ENCODE measurements at regions of chr12 and their contacts with region 1.

Region 1: GRCh38 chr12:6470375-6471163 is at the start of gene VAMP1:
- DNase-seq: peak; percentile 90
- H3K4me3 ChIP-seq: peak within 1 kb of the TSS; percentile 84
- H3K27ac ChIP-seq: peak within 1 kb of the TSS; percentile 87
- H3K27me3 ChIP-seq: no peaks in the 10 kb centered on the region
- CTCF ChIP-seq: no peak
- polyA plus RNA-seq, gene VAMP1: 15.1 and 18.3 TPM in 2 replicates

Region 2: DNA sequence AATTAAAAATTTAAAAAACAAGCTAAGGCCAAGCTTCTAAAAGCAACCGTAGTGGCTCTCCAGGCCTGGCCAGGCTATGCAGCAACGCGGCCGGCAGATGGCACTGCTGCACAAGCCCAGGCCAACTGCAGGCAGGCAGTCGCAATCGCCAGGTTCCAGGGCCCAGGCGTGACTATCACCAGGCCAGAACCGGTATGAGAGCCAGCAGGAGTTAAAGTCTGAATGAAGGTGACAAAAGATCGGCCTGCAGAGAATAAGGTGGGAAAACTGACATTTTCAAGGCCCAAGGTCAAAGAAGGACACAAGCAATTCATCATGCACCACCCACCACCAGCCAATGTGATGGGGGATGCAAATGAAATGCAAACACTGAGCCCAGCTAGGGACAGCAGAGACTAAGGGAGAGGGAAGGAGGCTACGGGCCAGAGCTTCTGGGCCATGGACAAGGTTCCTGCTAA is 481.9 kb before region 1 on chr12:
- CTCF ChIA-PET with region 1: interaction called, 24 read pairs
- POLR2A ChIA-PET with region 1: no interaction called
- DNase-seq: peak; percentile 43
- H3K4me3 ChIP-seq: no peak overlapping the region
- H3K27ac ChIP-seq: no peak overlapping the region
- H3K27me3 ChIP-seq: peaks cover 17% of the 10 kb centered on the region
- CTCF ChIP-seq: peak; percentile 99

Region 3: DNA sequence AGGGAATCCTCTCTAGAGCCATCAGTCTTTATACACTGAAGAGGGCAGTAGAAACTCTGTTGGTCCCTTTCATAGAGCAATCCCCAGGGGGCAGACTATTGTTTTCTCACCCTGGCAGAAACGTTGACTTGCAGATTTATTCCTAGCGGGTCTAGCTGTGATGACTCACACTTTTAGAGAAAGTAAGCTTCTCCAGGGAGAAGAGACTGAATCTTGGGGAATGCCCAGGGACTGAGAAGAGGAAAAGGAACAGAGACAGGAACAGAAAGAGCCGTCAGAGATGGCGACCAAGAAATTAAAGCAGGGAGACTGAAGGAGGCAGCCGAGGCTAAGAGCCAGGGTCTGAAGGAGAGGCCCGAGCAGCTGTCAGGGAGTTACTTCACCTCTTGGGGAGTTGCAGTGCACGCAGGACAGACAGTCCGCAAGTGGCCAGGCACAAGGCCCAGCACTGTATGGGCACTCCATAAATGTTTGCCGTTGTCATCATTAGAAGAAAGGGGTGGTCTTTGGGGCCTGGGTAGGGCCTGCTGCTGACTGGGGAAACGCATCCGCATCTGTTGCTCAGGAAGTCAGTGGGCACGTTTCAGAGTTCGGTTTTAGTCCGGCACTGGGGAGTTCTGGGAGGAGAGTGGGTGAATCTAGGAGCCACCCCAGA is 147.1 kb before region 1 on chr12:
- CTCF ChIA-PET with region 1: interaction called, 30 read pairs
- POLR2A ChIA-PET with region 1: interaction called, 7 read pairs
- DNase-seq: peak; percentile 79
- H3K4me3 ChIP-seq: no peak overlapping the region
- H3K27ac ChIP-seq: peak overlapping the region; percentile 90
- H3K27me3 ChIP-seq: no peaks in the 10 kb centered on the region
- CTCF ChIP-seq: peak; percentile 77

Region 4: DNA sequence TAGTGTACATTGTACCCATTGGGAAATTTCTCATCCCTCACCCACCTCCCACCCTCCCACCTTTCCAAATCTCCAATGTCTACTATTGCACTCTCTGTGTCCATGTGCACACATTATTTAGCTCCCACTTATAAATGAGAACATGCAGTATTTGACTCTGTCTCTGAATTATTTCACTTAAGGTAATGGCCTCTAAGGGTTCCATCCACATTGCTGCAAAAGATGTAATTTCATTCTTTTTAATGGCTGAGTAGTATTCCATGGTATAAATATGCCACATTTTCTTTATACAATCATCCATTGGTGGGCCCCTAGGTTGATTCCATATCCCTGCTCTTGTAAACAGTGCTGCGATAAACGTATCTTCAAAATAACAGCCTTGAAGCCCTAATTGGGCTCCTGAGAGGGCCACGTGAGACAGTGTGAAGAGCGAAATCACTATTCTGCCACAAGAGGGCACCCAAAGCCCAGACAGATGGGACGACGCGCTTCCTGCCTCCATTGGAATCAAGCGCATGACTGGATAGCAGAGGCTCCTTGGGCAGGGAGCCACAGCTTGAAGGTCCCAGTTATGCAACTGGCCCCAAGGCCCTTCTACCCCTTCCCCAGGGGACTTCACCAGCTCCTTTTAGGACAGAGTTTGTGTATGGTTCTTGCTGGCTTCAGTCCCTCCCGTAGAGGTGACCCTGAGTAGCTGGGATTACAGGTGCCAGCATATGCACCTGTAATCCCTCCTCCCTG is 47.1 kb before region 1 on chr12:
- CTCF ChIA-PET with region 1: interaction called, 87 read pairs
- POLR2A ChIA-PET with region 1: interaction called, 5 read pairs
- DNase-seq: peak; percentile 83
- H3K4me3 ChIP-seq: no peak overlapping the region
- H3K27ac ChIP-seq: no peak overlapping the region
- H3K27me3 ChIP-seq: no peaks in the 10 kb centered on the region
- CTCF ChIP-seq: peak; percentile 87

Region 5: GRCh38 chr12:6443361-6443983 is 27.1 kb before region 1 on chr12:
- CTCF ChIA-PET with region 1: interaction called, 41 read pairs
- POLR2A ChIA-PET with region 1: interaction called, 7 read pairs
- DNase-seq: no peak
- H3K4me3 ChIP-seq: no peak overlapping the region
- H3K27ac ChIP-seq: no peak overlapping the region
- H3K27me3 ChIP-seq: no peaks in the 10 kb centered on the region
- CTCF ChIP-seq: no peak

Region 6: GRCh38 chr12:6493497-6494257 is 23.1 kb after region 1 on chr12 and contains the start of gene NCAPD2:
- CTCF ChIA-PET with region 1: interaction called, 5 read pairs
- POLR2A ChIA-PET with region 1: interaction called, 34 read pairs
- DNase-seq: peak; percentile 88
- H3K4me3 ChIP-seq: peak within 1 kb of the TSS; percentile 97
- H3K27ac ChIP-seq: peak within 1 kb of the TSS; percentile 97
- H3K27me3 ChIP-seq: no peaks in the 10 kb centered on the region
- CTCF ChIP-seq: peak; percentile 35; the same call in 1 of the 2 replicates
- polyA plus RNA-seq, gene NCAPD2: 36.1 and 38.4 TPM in 2 replicates

Region 7: DNA sequence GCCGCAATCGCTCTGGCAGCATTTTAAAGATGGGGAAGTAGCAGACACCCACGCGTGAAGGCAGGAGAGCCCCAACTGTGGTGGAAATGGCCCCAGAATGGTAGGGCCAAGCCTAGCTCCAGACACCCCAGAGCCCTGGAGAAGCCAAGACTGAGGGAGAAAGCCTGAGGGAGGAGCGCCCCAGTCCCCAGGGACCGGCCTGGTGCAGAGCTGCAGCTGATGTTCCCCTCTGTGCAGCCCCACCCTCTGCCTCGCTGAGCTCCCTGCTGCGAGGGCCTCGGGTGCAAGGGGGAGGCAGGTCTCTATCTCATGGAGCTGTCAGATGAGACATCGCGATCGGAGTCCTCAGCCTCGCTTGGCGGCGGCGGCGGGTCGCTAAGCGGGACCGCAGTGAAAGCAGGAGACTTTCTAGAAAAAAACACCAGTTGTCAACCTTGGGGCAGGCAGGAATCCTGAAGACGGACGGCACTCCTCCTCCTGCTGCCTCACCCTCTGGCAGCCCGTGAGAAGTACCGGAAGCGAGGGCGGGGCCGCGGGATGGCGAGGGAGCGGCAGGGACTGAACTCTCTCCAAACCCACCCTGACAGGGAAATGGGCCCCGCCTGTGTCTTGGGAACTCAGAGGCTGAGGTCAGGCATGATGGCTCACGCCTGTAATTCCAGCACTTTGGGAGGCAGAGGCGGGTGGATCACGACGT is 69.8 kb after region 1 on chr12:
- CTCF ChIA-PET with region 1: interaction called, 16 read pairs
- POLR2A ChIA-PET with region 1: interaction called, 45 read pairs
- DNase-seq: peak; percentile 75
- H3K4me3 ChIP-seq: 0 out of 2 replicates have a peak overlapping the region, but pooled peaks have one; percentile 7
- H3K27ac ChIP-seq: peak overlapping the region; percentile 83
- H3K27me3 ChIP-seq: no peaks in the 10 kb centered on the region
- CTCF ChIP-seq: no peak